Motor neuron (in vitro differentiated cells): ENCODE measurements at regions of chr2 and their contacts with region 1.

Region 1: DNA sequence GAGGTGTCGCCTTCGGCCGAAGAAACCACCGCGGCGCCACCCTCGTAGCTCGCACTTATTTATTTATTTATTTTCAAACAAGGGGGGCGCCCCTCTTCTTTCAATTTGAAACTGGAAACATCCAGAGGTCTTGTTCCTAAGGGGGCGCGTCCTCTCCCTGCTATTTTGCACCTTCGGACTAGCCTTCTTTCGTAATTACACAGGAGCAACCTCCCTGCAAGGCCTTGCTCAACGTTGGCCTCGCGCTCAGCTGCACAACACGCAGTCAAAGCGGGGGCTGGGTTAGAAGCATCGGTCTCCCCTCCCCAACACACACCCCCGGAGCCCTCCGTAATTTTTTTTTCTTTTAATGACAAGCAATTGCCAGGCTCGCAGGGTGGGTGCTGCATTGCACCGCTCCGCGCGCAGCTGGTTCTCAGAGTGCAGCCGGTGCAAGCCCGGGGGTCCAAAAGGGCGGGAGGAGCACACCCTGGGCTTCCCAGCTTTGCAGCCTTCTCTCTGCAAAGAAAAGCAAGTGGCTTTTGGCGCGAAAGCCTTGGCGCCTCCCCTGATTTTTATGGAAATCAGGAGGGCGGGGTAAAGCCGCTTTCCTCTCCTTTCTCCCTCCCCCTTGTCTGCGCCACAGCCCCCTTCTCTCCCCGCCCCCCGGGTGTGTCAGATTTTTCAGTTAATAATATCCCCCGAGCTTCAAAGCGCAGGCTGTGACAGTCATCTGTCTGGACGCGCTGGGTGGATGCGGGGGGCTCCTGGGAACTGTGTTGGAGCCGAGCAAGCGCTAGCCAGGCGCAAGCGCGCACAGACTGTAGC is at the start of gene MYCN:
- ATAC-seq: peak; percentile 13 to 71 (median 65)
- H3K4me3 ChIP-seq: peak within 1 kb of the TSS; percentile 62 to 84 (median 73)
- H3K27ac ChIP-seq: peak within 1 kb of the TSS; percentile 69
- H3K4me1 ChIP-seq: peaks cover 7 to 12% of the 10 kb centered on the region in 2 donors
- total RNA-seq, gene MYCN: 0.31 to 55.9 (median 17.9) TPM in 6 of 8 experiments, not detected in the others

Region 2: DNA sequence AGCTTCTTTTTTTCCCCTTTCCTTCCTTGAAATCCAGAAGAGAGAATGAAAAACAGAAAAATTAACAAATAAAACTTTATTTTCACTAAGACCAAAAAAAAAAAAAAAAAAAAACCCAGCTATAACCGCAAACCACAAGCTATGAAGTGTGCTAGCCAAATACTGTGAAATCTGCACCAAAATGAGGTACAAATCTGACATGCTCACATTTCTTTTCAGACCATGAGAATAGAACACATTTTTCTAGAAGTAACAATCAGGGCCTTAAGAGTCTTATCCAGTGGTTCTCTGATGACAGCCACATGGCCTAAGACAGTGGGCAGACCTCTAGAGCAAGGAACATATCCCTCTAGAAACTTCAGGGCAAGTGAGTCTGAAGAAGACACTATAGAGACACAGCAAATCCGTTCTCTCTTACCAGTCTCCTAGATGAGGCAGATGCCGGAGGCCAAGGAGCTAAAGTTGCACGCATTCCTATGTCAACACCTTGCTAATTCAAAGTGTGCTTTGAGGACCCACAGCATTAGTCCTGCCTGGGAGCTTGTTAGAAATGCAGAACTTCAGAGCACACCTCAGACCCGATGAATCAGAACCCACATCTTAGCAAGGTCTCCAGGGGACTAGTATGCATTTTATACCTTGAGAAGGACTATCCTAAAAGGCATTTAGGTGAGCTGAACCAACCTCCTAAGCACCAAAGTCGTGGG is 317.4 kb after region 1 on chr2:
- in situ Hi-C with region 1: no loop called
- ATAC-seq: no peak
- H3K4me3 ChIP-seq: no peak overlapping the region
- H3K27ac ChIP-seq: no peak overlapping the region
- H3K4me1 ChIP-seq: peaks cover 3 to 12% of the 10 kb centered on the region in 2 donors

Region 3: DNA sequence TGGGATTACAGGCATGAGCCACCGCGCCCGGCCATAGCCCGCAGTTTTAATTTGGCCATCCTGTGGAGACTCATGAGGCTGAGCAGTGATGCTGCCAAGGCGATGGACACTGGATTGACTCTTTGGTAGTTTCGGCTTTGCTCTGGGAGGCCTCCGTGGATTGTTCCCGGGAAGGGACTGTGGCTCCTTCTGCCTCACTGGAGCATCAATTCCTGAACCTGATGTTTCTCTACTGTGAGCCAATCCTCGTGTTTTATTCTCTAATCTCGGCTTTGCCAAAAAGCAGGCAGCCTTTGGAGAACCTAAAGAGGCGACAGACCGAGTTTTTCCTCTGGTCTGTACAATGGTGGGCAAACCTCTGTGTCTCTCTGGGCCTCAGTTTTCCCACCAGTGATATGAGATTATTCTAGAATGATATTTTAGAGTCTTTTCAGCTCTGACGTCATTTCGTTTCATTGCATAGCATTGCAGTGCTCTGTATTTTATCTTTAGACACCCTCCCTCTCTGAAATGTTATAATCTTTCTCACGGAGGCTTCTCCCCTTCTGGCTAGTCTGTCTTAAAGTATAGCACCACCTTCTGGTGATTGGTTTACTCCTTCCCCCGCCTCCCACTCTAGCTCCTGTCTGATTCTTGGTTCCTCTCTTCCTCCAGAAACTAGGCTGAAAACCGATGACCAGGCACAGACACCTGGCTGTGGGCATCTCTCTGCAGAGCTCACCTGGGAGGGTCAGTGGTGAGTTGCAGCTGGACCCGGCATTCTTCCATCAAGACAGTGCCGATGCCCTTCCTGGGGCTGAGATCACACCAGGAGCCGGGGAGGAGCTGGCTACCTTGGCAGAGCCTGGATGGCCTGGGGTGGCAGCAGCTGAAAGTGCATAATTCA is 341.6 kb after region 1 on chr2:
- in situ Hi-C with region 1: loop called in 2 of 9 experiments (anchors 25 kb)
- ATAC-seq: peak; percentile 61 to 94 (median 84)
- H3K4me3 ChIP-seq: no peak overlapping the region
- H3K27ac ChIP-seq: no peak overlapping the region
- H3K4me1 ChIP-seq: no peaks in the 10 kb centered on the region

Region 4: DNA sequence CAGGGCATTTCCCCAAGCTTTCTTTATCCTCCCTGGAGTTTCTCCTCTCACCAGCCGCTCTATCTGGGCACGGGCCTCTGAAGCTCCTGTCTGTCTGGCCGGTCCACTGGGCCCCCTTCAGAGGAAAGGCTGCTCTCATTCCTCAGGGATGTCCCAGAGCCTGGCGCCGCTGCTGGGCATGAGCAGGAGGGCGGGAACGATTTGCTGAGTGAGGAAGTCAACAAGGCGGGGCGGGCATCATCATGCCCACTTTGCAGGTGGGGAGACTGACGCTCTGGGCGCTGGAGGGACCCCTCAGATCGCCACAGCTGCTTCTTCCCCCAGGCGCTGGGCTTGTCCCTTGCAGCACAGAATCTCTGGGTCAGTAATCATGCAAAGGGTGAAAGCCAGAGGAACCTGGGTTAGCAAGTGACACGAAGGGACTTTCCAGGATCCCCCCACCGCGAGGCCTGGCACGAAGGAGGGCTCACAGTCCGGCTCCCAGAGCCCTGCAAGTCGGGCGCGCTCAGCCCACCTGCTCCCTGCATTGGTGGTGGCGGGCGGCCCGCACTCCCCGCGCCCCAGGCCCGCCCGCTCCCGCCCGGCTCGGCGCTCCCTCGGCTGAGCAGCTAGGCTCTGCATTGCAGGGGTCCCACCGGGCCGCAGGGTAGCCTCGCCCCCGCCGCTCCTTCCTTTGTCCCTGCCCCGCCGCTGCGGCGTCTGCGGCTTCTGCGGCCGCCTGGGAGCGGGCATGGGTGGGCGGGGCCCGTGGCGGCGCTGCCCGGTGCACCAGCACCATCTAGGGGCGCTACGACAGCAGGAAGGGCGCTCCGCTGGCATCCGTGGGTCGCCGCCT is 567.8 kb after region 1 on chr2:
- in situ Hi-C with region 1: loop called in 8 of 9 experiments (anchors 25 kb)
- ATAC-seq: peak; percentile 61 to 98 (median 94)
- H3K4me3 ChIP-seq: peak overlapping the region; percentile 24 to 49 (median 37)
- H3K27ac ChIP-seq: no peak overlapping the region
- H3K4me1 ChIP-seq: peaks cover 18 to 26% of the 10 kb centered on the region in 2 donors

Region 5: DNA sequence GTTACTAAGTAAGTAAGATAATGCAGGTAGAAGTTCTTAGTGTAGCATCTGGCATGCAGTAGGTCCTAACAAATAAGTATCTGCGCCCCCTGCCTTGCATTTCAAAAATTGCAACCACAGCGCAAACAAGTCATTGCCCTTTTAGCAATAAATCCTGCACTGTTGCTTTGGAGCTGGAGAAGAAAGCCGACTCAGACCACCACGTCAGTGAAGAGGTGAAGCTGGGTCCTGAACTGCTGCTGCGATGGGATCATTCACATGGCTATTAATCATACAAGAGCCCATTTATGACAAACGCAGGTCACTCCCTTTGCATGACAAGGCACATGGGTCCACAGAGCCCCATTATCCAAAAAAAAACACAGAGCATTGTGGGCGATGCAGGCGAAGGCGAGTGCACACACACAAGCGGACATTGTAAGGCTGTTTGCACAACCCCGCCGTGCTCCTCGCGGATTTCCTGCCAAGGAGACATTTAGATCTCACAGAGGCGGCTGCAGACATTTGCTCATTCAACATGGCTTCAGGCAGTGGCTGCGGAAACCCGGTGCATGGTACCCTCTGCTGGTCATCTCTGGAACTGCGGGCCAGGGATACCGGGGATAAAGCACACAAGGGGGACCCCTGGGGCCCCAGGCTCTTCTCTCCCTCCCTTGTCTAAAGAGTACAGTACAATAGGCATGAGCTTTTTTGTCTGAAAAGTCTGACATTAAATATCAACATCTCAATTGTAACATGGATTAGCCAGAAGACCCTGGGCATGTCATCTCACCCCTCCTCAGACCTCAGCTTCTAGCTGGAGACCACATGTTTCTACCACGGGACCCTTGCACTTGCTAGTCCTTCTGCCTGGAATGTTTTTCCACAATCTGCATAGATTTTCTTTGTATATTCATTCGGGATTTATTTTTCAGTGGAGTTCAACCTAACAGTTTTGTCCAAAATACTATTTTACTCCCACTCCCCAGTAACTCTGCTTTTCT is 668.9 kb after region 1 on chr2:
- in situ Hi-C with region 1: loop called in 2 of 9 experiments (anchors 25 kb)
- ATAC-seq: peak; percentile 82 to 92 (median 90)
- H3K4me3 ChIP-seq: peak overlapping the region; percentile 22 to 32 (median 30)
- H3K27ac ChIP-seq: peak overlapping the region; percentile 60 to 78
- H3K4me1 ChIP-seq: peaks cover 6 to 14% of the 10 kb centered on the region in 2 donors